Thyroid gland (tissue), 4 donors: ENCODE measurements at regions of chr1 and their contacts with region 1.

Region 1: GRCh38 chr1:192808518-192809306 is at the start of gene RGS2:
- DNase-seq: peak; percentile 88 to 91
- H3K4me3 ChIP-seq: peak within 1 kb of the TSS; percentile 51 to 78 (median 54)
- H3K27ac ChIP-seq: peak within 1 kb of the TSS; percentile 83 to 95 (median 89)
- H3K4me1 ChIP-seq: peaks cover 12 to 16% of the 10 kb centered on the region in 2 donors
- H3K27me3 ChIP-seq: no peaks in the 10 kb centered on the region
- CTCF ChIP-seq: peak in 1 of 6 experiments; percentile 4
- POLR2A ChIP-seq: peak; percentile 67 to 99
- total RNA-seq, gene RGS2: 9.1 to 39.0 (median 17.8) TPM

Region 2: DNA sequence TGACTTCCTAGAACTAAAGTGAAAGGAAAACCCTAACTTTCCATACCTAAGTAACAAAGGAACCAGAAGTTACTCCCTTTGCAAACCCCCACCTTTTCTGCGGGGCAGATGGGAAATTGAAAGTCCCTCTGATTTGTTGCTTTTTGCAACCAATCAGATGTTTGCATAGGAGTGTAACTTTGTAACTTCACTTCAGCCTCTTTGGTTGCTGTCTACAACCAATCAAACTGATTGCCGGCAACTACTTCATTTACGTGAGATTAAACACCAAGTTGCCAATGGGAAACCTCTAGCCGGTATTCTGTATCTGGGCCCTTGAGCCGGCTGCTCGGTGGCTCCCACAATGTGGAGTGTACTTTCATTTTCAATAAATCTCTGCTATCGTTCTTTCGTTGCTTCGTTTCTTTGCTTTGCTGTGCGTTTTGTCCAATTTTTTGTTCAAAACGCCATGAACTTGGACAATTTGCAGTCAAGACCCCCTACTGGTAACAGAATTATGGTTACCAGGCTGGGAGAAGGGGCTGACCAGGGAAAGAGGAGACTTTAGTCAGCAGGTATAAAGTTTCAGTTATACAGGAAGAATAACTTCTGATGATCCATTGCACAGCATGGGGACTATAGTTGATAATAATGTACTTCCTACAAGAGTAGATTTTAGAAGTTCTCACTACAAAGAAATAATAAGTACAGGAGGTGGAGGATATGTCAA is 69.1 kb before region 1 on chr1:
- intact Hi-C with region 1: no loop called
- DNase-seq: no peak
- H3K4me3 ChIP-seq: no peak overlapping the region
- H3K27ac ChIP-seq: no peak overlapping the region
- H3K4me1 ChIP-seq: no peaks in the 10 kb centered on the region
- H3K27me3 ChIP-seq: no peaks in the 10 kb centered on the region
- CTCF ChIP-seq: no peak
- POLR2A ChIP-seq: no peak

Region 3: DNA sequence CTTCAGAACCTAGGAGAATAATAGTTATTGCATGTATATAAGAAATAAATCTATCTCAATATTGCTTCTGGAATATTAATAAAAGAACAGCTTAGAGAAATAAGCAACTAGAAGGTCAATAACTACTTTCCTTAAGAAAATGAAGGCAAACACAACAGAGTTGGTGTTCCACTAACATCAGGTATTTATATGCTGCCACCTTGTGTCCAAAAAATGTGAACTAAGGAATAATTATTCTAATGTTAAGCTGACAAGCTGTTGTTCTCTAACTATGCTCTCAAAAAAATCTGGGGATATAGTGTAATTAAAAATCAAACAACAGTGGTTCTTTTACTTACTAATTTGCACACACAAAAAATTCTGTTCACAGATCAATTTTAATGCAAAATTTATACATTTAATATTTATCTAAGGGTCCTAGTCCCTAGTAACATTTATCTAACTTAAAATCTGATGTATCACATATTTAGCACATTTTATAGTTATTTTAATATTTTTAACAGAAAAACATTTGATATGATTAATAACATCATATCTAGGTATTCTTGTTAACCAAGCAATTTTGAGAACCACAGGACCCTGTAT is 210.8 kb after region 1 on chr1:
- intact Hi-C with region 1: loop called (anchors 10 kb)
- DNase-seq: no peak
- H3K4me3 ChIP-seq: no peak overlapping the region
- H3K27ac ChIP-seq: no peak overlapping the region
- H3K4me1 ChIP-seq: no peaks in the 10 kb centered on the region
- H3K27me3 ChIP-seq: no peaks in the 10 kb centered on the region
- CTCF ChIP-seq: peak in 5 of 6 experiments; percentile 21 to 56 (median 45)
- POLR2A ChIP-seq: no peak

Region 4: GRCh38 chr1:193085263-193085662 is 276.6 kb after region 1 on chr1:
- intact Hi-C with region 1: no loop called
- DNase-seq: no peak
- H3K4me3 ChIP-seq: no peak overlapping the region
- H3K27ac ChIP-seq: no peak overlapping the region
- H3K4me1 ChIP-seq: peaks cover 0 to 13% of the 10 kb centered on the region in 2 donors
- H3K27me3 ChIP-seq: no peaks in the 10 kb centered on the region
- CTCF ChIP-seq: no peak
- POLR2A ChIP-seq: no peak